CD4-positive, alpha-beta memory T cell (primary cell): ENCODE measurements at regions of chr11 and their contacts with region 1.

Region 1: DNA sequence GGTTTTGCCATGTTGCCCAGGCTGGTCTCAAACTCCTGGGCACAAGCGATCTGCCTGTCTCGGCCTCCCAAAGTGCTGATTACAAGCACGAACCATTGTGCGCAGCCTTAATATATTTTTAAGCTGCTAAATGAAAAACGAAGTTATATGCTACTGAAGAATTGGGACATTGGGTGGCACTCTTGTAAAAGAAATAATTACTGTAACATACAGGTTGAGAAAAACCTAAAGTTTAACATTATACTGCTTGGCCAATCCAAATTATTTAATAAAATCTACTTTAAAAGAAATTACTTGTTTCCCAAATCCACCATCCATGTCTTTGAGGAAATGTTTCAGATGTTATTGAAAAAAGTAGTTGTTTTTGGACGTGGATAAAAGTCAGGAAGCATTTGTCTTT is 37.9 kb upstream of the ARHGAP32 start:
- DNase-seq: no peak
- H3K4me3 ChIP-seq: no peak overlapping the region
- H3K4me3 Mint-ChIP-seq: no peak overlapping the region
- H3K27ac ChIP-seq: no peak overlapping the region
- H3K27ac Mint-ChIP-seq: no peak overlapping the region
- H3K4me1 ChIP-seq: no peaks in the 10 kb centered on the region
- H3K4me1 Mint-ChIP-seq: no peaks in the 10 kb centered on the region
- H3K27me3 ChIP-seq: no peaks in the 10 kb centered on the region
- H3K27me3 Mint-ChIP-seq: peaks cover 0 to 2% of the 10 kb centered on the region in 2 donors

Region 2: GRCh38 chr11:129298988-129299387 is 69.0 kb after region 1 on chr11:
- CTCF ChIA-PET with region 1: no interaction called
- POLR2A ChIA-PET with region 1: no interaction called
- intact Hi-C with region 1: no loop called
- DNase-seq: no peak
- H3K4me3 ChIP-seq: no peak overlapping the region
- H3K4me3 Mint-ChIP-seq: no peak overlapping the region
- H3K27ac ChIP-seq: no peak overlapping the region
- H3K27ac Mint-ChIP-seq: no peak overlapping the region
- H3K4me1 ChIP-seq: no peaks in the 10 kb centered on the region
- H3K4me1 Mint-ChIP-seq: peaks cover 0 to 1% (median 0%) of the 10 kb centered on the region in 4 donors
- H3K27me3 ChIP-seq: no peaks in the 10 kb centered on the region
- H3K27me3 Mint-ChIP-seq: peaks cover 4 to 17% of the 10 kb centered on the region in 2 donors

Region 3: DNA sequence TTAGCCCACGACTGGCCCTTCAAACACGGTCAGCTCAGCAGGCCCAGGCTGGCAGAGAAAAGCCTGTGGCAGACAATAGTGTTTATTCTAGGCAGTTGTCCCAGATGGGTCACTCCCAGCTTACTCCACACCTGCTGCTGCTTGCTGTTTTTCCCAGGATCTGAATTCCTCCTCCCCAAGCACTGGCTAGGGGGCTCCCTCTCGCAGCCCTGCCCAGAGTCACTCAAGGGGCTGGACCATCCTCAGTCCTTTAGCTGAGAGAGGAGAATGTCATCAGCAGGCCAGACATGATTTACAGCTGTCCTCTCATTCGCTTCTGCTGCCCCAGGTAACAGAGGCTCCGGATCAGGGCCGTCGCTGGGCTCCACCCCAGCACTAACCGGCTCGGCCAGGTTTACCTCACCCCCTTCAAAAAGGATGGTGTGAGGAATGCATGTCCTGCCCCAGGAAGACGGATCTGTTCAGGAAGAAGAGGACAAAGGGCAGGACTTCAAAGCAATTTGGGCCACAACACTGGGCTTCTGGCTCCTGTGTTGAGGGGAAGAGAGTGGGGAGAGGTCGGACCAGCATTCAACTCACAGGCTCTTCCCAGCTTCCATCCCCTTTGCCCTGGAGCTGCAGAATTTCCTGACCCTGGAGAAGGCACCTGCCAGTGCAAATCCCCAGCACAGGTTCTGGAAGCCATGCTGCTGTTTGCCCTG is 85.9 kb after region 1 on chr11:
- CTCF ChIA-PET with region 1: no interaction called
- POLR2A ChIA-PET with region 1: no interaction called
- intact Hi-C with region 1: loop called (anchors 5 kb)
- DNase-seq: no peak
- H3K4me3 ChIP-seq: no peak overlapping the region
- H3K4me3 Mint-ChIP-seq: no peak overlapping the region
- H3K27ac ChIP-seq: no peak overlapping the region
- H3K27ac Mint-ChIP-seq: peak overlapping the region in 1 of 7 donors; percentile 52
- H3K4me1 ChIP-seq: no peaks in the 10 kb centered on the region
- H3K4me1 Mint-ChIP-seq: peaks cover 0 to 6% (median 2%) of the 10 kb centered on the region in 4 donors
- H3K27me3 ChIP-seq: no peaks in the 10 kb centered on the region
- H3K27me3 Mint-ChIP-seq: peaks cover 0 to 1% of the 10 kb centered on the region in 2 donors

Region 4: GRCh38 chr11:129331871-129332274 is 101.9 kb after region 1 on chr11:
- CTCF ChIA-PET with region 1: interaction called, 22 read pairs
- POLR2A ChIA-PET with region 1: no interaction called
- intact Hi-C with region 1: loop called (anchors 1 kb)
- DNase-seq: peak; percentile 33 to 45 (median 36)
- H3K4me3 ChIP-seq: no peak overlapping the region
- H3K4me3 Mint-ChIP-seq: no peak overlapping the region
- H3K27ac ChIP-seq: no peak overlapping the region
- H3K27ac Mint-ChIP-seq: peak overlapping the region in 2 of 7 donors; percentile 79 to 83
- H3K4me1 ChIP-seq: no peaks in the 10 kb centered on the region
- H3K4me1 Mint-ChIP-seq: peaks cover 0 to 6% (median 2%) of the 10 kb centered on the region in 4 donors
- H3K27me3 ChIP-seq: no peaks in the 10 kb centered on the region
- H3K27me3 Mint-ChIP-seq: peaks cover 1 to 3% of the 10 kb centered on the region in 2 donors

Region 5: DNA sequence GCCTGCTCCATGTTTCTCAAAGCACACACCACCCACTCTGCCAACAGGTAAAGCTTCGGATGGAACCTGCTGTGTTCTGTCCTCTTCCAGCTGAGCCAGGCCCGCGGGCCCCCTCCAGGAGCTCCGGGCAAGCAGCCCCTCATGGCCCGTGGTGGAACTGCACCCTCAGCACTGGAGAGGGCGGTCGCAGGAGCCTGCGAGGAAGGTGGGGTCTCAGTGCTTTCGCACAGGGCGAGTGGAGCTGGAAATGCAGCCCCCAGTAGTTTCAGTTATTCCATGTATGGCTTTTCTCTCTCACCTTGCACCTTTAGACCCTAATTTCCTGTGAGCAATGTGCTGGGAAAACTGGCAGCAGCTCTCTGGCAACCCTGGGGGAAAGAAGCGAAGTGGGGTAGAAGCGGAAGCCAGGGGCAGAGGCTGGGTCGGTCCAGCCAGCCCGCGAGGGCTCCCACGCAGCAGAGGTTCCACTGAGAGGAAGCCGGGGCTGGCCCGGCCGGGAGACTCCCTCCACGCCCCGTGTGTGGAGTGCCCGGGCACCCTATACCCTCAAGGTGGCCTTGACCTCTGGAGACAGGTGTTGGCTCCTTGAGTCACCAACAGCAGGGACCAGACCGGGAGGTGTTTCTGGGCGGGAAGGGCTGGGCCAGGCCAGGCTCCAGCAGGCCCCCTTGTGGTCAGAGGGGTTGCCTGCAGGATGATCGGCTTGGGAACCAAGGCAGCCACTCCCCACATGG is 465.7 kb after region 1 on chr11:
- CTCF ChIA-PET with region 1: no interaction called
- POLR2A ChIA-PET with region 1: no interaction called
- intact Hi-C with region 1: loop called (anchors 2 kb)
- DNase-seq: peak; percentile 48 to 60 (median 59)
- H3K4me3 ChIP-seq: peak overlapping the region; percentile 46 to 69
- H3K4me3 Mint-ChIP-seq: peak overlapping the region; percentile 76 to 90 (median 84)
- H3K27ac ChIP-seq: no peak overlapping the region
- H3K27ac Mint-ChIP-seq: peak overlapping the region in 4 of 7 donors; percentile 39 to 66 (median 50)
- H3K4me1 ChIP-seq: peaks cover 6% of the 10 kb centered on the region
- H3K4me1 Mint-ChIP-seq: peaks cover 7 to 19% (median 9%) of the 10 kb centered on the region in 4 donors
- H3K27me3 ChIP-seq: no peaks in the 10 kb centered on the region
- H3K27me3 Mint-ChIP-seq: no peaks in the 10 kb centered on the region